ENCODE measurements at regions of chr17 and their contacts with region 1.

Region 1: GRCh38 chr17:8079291-8080207 is 8.0 kb downstream of the ALOX12B start:
- DNase-seq: peak; percentile 74 to 95
- H3K4me3 ChIP-seq: peak overlapping the region; percentile 58 to 72 (median 64)
- H3K27ac ChIP-seq: no peak overlapping the region
- H3K4me1 ChIP-seq: peaks cover 0 to 5% (median 2%) of the 10 kb centered on the region in 4 experiments; a peak in 4 of 7 replicates
- H3K27me3 ChIP-seq: peaks cover 3 to 40% (median 29%) of the 10 kb centered on the region in 4 experiments
- CTCF ChIP-seq: peak; percentile 95 to 96 (median 96)
- EP300 ChIP-seq: no peak
- POLR2A ChIP-seq: no peak
- RAD21 ChIP-seq: peak; percentile 60 to 69

Region 2: GRCh38 chr17:8091033-8091687 is 11.6 kb after region 1 on chr17:
- CTCF ChIA-PET with region 1: interaction called, 315 read pairs
- POLR2A ChIA-PET with region 1: no interaction called
- DNase-seq: no peak
- H3K4me3 ChIP-seq: no peak overlapping the region
- H3K27ac ChIP-seq: no peak overlapping the region
- H3K4me1 ChIP-seq: peaks cover 0 to 7% (median under 1%) of the 10 kb centered on the region in 4 experiments; a peak in 5 of 7 replicates
- H3K27me3 ChIP-seq: peaks cover 0 to 10% (median 4%) of the 10 kb centered on the region in 4 experiments; a peak in 4 of 7 replicates
- CTCF ChIP-seq: no peak
- EP300 ChIP-seq: no peak
- POLR2A ChIP-seq: no peak
- RAD21 ChIP-seq: no peak

Region 3: GRCh38 chr17:8109661-8110464 is 30.3 kb after region 1 on chr17:
- CTCF ChIA-PET with region 1: interaction called, 501 read pairs
- POLR2A ChIA-PET with region 1: interaction called, 3 read pairs
- DNase-seq: peak in 1 of 2 experiments; percentile 92
- H3K4me3 ChIP-seq: peak overlapping the region; percentile 39 to 69 (median 67)
- H3K27ac ChIP-seq: no peak overlapping the region
- H3K4me1 ChIP-seq: peaks cover 0 to 13% (median 3%) of the 10 kb centered on the region in 4 experiments; a peak in 5 of 7 replicates
- H3K27me3 ChIP-seq: peaks cover 3 to 47% (median 35%) of the 10 kb centered on the region in 4 experiments
- CTCF ChIP-seq: peak; percentile 84 to 94 (median 90)
- EP300 ChIP-seq: no peak
- POLR2A ChIP-seq: no peak
- RAD21 ChIP-seq: peak; percentile 72 to 84

Region 4: DNA sequence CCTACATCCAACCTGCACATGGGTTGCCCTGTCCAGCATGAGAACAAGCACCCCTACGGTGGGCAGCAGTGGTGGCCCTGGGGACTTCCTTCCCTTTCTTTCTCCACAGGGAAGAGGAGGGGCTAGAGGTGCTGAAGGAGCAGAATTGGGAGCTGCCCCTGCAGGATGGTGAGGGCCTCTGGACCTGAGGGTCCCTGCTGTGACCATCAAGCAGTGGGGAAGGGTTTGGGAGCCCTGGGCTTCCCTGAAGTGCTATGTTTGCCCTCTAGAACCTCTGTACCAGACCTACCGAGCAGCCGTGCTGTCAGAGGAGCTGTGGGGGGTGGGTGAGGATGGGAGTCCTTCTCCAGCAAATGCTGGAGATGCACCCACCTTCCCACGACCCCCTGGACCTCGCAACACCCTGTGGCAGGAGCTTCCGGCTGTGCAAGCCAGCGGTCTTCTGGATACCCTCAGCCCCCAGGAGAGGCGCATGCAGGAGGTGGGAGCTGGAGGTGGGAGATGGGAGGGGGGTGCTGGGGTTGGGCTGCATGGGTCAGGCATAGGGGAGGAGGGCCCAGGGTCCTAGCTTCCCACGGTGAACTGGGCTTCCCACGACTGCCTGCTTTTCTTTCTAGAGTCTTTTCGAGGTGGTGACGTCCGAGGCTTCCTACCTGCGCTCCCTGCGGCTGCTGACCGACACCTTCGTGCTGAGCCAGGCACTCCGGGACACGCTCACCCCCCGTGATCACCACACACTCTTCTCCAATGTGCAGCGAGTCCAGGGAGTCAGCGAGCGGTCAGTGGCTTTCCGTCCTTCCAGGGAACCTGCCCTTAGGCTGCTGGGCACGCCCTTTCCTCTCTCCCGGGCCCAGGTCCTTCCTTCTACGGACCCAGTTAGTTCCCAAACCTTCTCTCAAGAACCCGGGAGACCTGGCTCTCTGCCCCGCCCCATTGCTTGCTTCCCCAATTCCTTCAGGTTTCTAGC is 235.5 kb after region 1 on chr17:
- CTCF ChIA-PET with region 1: no interaction called
- POLR2A ChIA-PET with region 1: no interaction called
- DNase-seq: no peak
- H3K4me3 ChIP-seq: peak overlapping the region; percentile 46 to 79 (median 66)
- H3K27ac ChIP-seq: no peak overlapping the region
- H3K4me1 ChIP-seq: peaks cover 0 to 16% (median 6%) of the 10 kb centered on the region in 4 experiments; a peak in 5 of 7 replicates
- H3K27me3 ChIP-seq: peaks cover 3 to 28% (median 23%) of the 10 kb centered on the region in 4 experiments
- CTCF ChIP-seq: no peak
- EP300 ChIP-seq: no peak
- POLR2A ChIP-seq: no peak
- RAD21 ChIP-seq: no peak

Measured in H1 (cell line).